Activated CD8-positive, alpha-beta T cell treated with anti-CD3 and anti-CD28 coated beads, Interleukin-2, amount 10 ng/mL, durations not matched to agents 7 days and 5 days (primary cell): ENCODE measurements at regions of chr13 and their contacts with region 1.

Region 1: DNA sequence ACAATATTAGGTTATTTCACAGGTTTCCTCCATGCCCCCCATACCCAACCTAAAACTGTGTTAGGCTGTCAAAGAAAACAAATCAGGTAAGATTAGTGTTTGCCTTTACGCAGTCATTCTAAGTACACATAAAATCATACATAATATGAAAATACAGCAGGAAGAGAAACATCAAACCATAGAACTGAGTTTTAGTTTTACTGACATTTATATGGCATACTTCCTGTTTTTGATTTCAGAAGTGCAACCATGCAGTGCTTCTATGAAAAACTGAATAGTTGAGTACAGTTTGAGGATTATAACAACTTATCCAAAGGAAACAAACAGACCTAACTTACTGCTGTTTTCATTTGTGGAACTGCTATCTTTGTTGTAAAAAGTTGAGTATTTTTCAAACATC is 91.3 kb downstream of the KCNRG start:
- DNase-seq: no peak
- ATAC-seq: peak; percentile 42
- H3K4me3 Mint-ChIP-seq: no peak overlapping the region
- H3K27ac Mint-ChIP-seq: peak overlapping the region; percentile 82
- H3K4me1 Mint-ChIP-seq: peaks cover 22% of the 10 kb centered on the region
- H3K27me3 Mint-ChIP-seq: no peaks in the 10 kb centered on the region

Region 2: GRCh38 chr13:49569956-49570689 is 536.4 kb before region 1 on chr13:
- CTCF ChIA-PET with region 1: no interaction called
- POLR2A ChIA-PET with region 1: no interaction called
- DNase-seq: no peak
- ATAC-seq: peak; percentile 53
- H3K4me3 Mint-ChIP-seq: no peak overlapping the region
- H3K27ac Mint-ChIP-seq: peak overlapping the region; percentile 71
- H3K4me1 Mint-ChIP-seq: peaks cover 23% of the 10 kb centered on the region
- H3K27me3 Mint-ChIP-seq: no peaks in the 10 kb centered on the region

Region 3: DNA sequence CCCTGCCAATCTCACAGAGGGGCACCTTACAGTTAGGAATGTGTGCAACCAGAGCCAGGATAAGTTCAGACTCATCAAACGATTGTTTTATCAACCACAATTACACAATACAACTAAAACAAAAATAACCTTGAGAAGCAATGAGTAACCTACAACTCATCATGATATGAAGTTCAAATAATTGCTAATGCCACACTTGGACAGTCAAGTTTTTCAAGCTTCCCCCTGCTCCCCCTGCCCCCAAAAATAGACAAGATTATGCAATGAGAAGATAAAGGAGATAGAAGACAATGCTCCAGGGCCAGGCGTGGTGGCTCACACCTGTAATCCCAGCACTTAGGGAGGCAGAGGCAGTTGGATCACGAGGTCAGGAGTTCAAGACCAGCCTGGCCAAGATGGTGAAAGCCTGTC is 300.4 kb before region 1 on chr13:
- CTCF ChIA-PET with region 1: no interaction called
- POLR2A ChIA-PET with region 1: no interaction called
- DNase-seq: no peak
- ATAC-seq: no peak
- H3K4me3 Mint-ChIP-seq: no peak overlapping the region
- H3K27ac Mint-ChIP-seq: no peak overlapping the region
- H3K4me1 Mint-ChIP-seq: no peaks in the 10 kb centered on the region
- H3K27me3 Mint-ChIP-seq: peaks cover 12% of the 10 kb centered on the region

Region 4: DNA sequence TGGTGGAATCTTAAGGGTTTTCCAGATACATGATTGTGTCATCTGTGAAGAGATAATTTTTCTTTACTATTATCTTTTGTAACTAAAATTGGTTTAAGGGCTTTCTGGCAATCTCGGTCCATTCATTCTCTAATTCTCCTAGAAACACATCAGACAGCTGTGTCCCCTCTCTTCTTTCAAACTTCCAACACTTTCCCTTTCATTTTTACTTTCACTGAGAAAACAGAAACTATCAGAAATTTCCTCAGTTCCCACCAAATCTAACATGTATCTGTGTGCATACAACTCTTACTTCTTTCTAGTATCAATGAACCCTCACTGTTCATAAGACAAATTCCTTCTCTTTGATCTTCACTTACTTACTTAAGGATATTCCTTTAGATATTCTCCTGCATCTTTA is 51.1 kb before region 1 on chr13:
- CTCF ChIA-PET with region 1: no interaction called
- POLR2A ChIA-PET with region 1: no interaction called
- DNase-seq: no peak
- ATAC-seq: no peak
- H3K4me3 Mint-ChIP-seq: no peak overlapping the region
- H3K27ac Mint-ChIP-seq: no peak overlapping the region
- H3K4me1 Mint-ChIP-seq: peaks cover 51% of the 10 kb centered on the region
- H3K27me3 Mint-ChIP-seq: no peaks in the 10 kb centered on the region

Region 5: GRCh38 chr13:50123862-50124536 is 17.4 kb after region 1 on chr13:
- CTCF ChIA-PET with region 1: interaction called, 4 read pairs
- POLR2A ChIA-PET with region 1: interaction called, 11 read pairs
- DNase-seq: peak; percentile 76
- ATAC-seq: peak; percentile 74
- H3K4me3 Mint-ChIP-seq: peak overlapping the region; percentile 84
- H3K27ac Mint-ChIP-seq: peak overlapping the region; percentile 90
- H3K4me1 Mint-ChIP-seq: peaks cover 47% of the 10 kb centered on the region
- H3K27me3 Mint-ChIP-seq: peaks cover 7% of the 10 kb centered on the region

Region 6: GRCh38 chr13:50198508-50198907 is 91.9 kb after region 1 on chr13:
- CTCF ChIA-PET with region 1: no interaction called
- POLR2A ChIA-PET with region 1: no interaction called
- DNase-seq: no peak
- ATAC-seq: no peak
- H3K4me3 Mint-ChIP-seq: no peak overlapping the region
- H3K27ac Mint-ChIP-seq: no peak overlapping the region
- H3K4me1 Mint-ChIP-seq: no peaks in the 10 kb centered on the region
- H3K27me3 Mint-ChIP-seq: peaks cover 11% of the 10 kb centered on the region